ENCODE measurements at regions of chr2 and their contacts with region 1.

Region 1: DNA sequence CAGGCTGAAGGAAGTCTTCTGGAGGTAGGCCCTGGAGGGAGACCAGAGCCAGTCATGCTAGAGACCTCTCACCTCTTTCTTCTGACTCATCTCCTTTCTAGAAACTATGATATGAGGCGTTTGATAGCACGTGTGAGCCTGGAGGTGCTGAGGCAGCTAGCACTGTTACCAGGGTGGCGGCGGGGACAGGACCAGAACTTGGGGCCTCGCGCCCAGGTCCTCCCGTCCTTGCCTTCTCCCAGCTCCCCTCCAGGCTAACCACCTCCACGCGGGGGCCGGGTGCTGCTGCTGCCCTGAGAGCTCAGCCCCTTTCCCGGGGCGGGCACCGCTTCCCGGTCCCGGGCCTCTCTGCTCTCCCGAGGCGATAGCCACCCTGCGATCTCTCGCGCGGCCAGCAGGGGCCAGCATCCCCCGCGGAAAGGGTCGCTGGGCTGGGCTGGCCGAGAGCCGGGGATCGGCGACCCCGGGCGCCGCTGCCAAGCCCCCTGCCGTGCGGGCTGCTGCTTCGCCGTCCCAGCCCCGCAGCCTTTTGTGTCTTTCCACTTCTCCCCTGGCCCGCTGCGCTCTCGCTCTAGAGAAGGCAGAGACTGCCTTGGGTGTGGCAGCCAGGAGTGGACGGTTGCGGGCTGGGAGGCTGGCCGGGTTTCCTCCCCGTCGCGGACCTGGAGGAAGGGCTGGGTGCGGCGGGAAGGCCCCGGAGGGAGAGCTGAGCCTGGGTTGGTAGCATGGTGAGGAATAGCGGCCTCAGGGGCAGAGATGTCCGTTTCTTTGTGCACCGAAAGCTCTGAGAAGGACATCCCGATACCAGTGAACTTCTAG is 49.1 kb downstream of the TMEM17 start:
- DNase-seq: peak; percentile 69
- H3K4me3 ChIP-seq: peak overlapping the region; percentile 21 to 60 (median 45)
- H3K27ac ChIP-seq: no peak overlapping the region
- H3K4me1 ChIP-seq: peaks cover 5% of the 10 kb centered on the region
- H3K27me3 ChIP-seq: no peaks in the 10 kb centered on the region
- CTCF ChIP-seq: peak; percentile 92 to 93
- POLR2A ChIP-seq: no peak

Region 2: DNA sequence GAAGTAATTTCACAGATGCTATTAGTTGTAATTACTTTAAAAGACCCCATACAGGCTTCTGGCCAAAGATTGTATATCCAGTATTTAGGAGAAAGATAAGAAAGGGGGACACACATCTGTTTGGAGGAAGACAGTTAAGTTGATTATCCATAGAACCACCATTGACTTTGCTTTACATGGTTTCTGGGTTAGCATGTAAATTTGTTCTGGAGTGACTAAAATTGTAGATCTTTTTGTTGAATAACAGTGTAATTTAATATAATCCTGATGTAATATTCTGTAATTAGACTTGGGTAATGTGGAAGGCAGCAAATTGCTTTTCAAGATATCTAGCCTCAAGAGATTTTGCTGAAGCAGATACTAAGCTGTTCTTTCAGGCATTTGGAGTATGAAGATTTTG is 534.2 kb before region 1 on chr2:
- CTCF ChIA-PET with region 1: interaction called, 5 read pairs
- POLR2A ChIA-PET with region 1: no interaction called
- dilution Hi-C with region 1: no loop called
- intact Hi-C with region 1: loop called (anchors 2 kb)
- DNase-seq: no peak
- H3K4me3 ChIP-seq: no peak overlapping the region
- H3K27ac ChIP-seq: no peak overlapping the region
- H3K4me1 ChIP-seq: no peaks in the 10 kb centered on the region
- H3K27me3 ChIP-seq: no peaks in the 10 kb centered on the region
- CTCF ChIP-seq: no peak
- POLR2A ChIP-seq: no peak

Region 3: GRCh38 chr2:62099523-62100175 is 357.3 kb before region 1 on chr2:
- CTCF ChIA-PET with region 1: no interaction called
- POLR2A ChIA-PET with region 1: no interaction called
- dilution Hi-C with region 1: no loop called
- intact Hi-C with region 1: no loop called
- DNase-seq: no peak
- H3K4me3 ChIP-seq: no peak overlapping the region
- H3K27ac ChIP-seq: no peak overlapping the region
- H3K4me1 ChIP-seq: no peaks in the 10 kb centered on the region
- H3K27me3 ChIP-seq: no peaks in the 10 kb centered on the region
- CTCF ChIP-seq: no peak
- POLR2A ChIP-seq: no peak

Region 4: GRCh38 chr2:62467475-62468321 is 10.8 kb after region 1 on chr2:
- CTCF ChIA-PET with region 1: interaction called, 26 read pairs
- POLR2A ChIA-PET with region 1: no interaction called
- dilution Hi-C with region 1: no loop called
- intact Hi-C with region 1: no loop called
- DNase-seq: no peak
- H3K4me3 ChIP-seq: no peak overlapping the region
- H3K27ac ChIP-seq: no peak overlapping the region
- H3K4me1 ChIP-seq: no peaks in the 10 kb centered on the region
- H3K27me3 ChIP-seq: no peaks in the 10 kb centered on the region
- CTCF ChIP-seq: no peak
- POLR2A ChIP-seq: no peak

Region 5: GRCh38 chr2:62705007-62705829 is 248.3 kb after region 1 on chr2 and contains the start of gene EHBP1:
- CTCF ChIA-PET with region 1: interaction called, 17 read pairs
- POLR2A ChIA-PET with region 1: no interaction called
- dilution Hi-C with region 1: no loop called
- intact Hi-C with region 1: loop called (anchors 1 kb)
- DNase-seq: peak; percentile 100
- H3K4me3 ChIP-seq: peak within 1 kb of the TSS; percentile 84 to 87 (median 85)
- H3K27ac ChIP-seq: peak within 1 kb of the TSS; percentile 29
- H3K4me1 ChIP-seq: peaks cover 17% of the 10 kb centered on the region
- H3K27me3 ChIP-seq: no peaks in the 10 kb centered on the region
- CTCF ChIP-seq: no peak
- POLR2A ChIP-seq: peak; percentile 69
- total RNA-seq, gene EHBP1: 31.6 and 34.8 TPM in 2 replicates

Region 6: GRCh38 chr2:62774555-62775366 is 317.8 kb after region 1 on chr2:
- CTCF ChIA-PET with region 1: interaction called, 306 read pairs
- POLR2A ChIA-PET with region 1: no interaction called
- dilution Hi-C with region 1: no loop called
- intact Hi-C with region 1: loop called (anchors 1 kb)
- DNase-seq: peak; percentile 62
- H3K4me3 ChIP-seq: no peak overlapping the region
- H3K27ac ChIP-seq: no peak overlapping the region
- H3K4me1 ChIP-seq: no peaks in the 10 kb centered on the region
- H3K27me3 ChIP-seq: no peaks in the 10 kb centered on the region
- CTCF ChIP-seq: peak; percentile 38 to 41
- POLR2A ChIP-seq: no peak

Region 7: GRCh38 chr2:62923242-62923641 is 466.3 kb after region 1 on chr2:
- CTCF ChIA-PET with region 1: no interaction called
- POLR2A ChIA-PET with region 1: no interaction called
- dilution Hi-C with region 1: no loop called
- intact Hi-C with region 1: no loop called
- DNase-seq: no peak
- H3K4me3 ChIP-seq: no peak overlapping the region
- H3K27ac ChIP-seq: no peak overlapping the region
- H3K4me1 ChIP-seq: no peaks in the 10 kb centered on the region
- H3K27me3 ChIP-seq: no peaks in the 10 kb centered on the region
- CTCF ChIP-seq: no peak
- POLR2A ChIP-seq: no peak

Region 8: GRCh38 chr2:63189026-63189425 is 732.1 kb after region 1 on chr2:
- CTCF ChIA-PET with region 1: interaction called, 7 read pairs
- POLR2A ChIA-PET with region 1: no interaction called
- dilution Hi-C with region 1: no loop called
- intact Hi-C with region 1: loop called (anchors 1 kb)
- DNase-seq: peak; percentile 39
- H3K4me3 ChIP-seq: no peak overlapping the region
- H3K27ac ChIP-seq: no peak overlapping the region
- H3K4me1 ChIP-seq: no peaks in the 10 kb centered on the region
- H3K27me3 ChIP-seq: no peaks in the 10 kb centered on the region
- CTCF ChIP-seq: peak; percentile 73 to 88
- POLR2A ChIP-seq: no peak

Measured in endothelial cell of umbilical vein (primary cell).